GM10248 (cell line): ENCODE measurements at regions of chr9 and their contacts with region 1.

Region 1: DNA sequence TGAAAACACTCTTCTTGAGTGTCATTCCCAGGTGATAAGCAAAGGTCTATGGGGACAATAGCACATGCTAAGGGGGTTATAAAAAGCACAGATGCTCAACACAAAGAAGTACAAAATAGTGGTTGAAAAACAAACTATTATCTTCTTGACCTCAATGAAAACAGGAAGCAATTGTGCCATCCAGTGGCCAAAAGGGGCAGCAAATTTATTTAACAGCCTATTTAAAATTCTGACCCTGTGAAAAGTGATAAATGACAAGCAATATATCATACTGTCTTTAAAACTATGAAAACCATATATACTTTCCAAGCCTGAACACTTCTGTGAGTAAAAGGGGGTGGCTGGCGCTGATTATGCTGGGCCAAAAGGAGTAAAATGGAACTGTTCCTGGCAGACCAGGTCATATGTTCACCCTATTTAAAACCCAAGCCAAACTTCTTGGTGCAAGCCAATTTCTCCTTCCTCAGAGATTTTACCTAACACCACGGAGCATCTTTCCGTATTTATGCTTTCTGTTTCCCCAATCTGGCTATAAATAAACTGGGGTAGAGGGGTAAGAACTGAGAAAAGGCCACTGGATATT is 29.7 kb downstream of the TEX10 start:
- DNase-seq: peak; percentile 13
- CTCF ChIP-seq: peak; percentile 58

Region 2: DNA sequence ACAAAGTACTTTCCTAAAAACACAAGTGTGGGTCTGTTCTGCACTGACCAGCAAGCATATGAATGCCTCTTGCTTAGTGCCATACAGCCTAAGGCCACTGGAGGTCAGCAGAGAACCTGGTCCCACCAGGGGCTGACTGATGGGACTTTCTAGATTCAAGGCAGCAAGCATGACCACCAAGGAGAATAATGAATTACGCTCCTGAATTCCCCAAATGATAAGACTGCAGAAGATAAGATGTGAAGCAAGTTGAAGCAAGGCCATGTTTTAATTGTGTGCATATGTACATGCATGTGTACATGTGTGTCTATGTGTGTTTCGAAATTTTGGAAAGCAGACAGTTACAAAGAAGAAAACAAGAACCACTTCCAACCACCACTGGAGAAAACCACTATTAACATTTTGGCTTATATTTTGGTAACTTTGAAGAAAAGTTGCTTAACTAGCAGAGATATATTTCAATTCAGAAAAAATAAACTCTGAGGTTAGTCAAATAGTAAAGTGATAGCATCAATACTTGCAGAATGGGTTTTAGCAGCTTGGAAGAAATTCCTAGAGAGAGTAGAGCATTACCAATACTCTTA is 294.8 kb before region 1 on chr9:
- CTCF ChIA-PET with region 1: interaction called, 10 read pairs
- POLR2A ChIA-PET with region 1: no interaction called
- DNase-seq: peak; percentile 66
- CTCF ChIP-seq: peak; percentile 94

Region 3: GRCh38 chr9:100216178-100216787 is 106.8 kb before region 1 on chr9:
- CTCF ChIA-PET with region 1: interaction called, 14 read pairs
- POLR2A ChIA-PET with region 1: no interaction called
- DNase-seq: peak; percentile 55
- CTCF ChIP-seq: peak; percentile 82

Region 4: DNA sequence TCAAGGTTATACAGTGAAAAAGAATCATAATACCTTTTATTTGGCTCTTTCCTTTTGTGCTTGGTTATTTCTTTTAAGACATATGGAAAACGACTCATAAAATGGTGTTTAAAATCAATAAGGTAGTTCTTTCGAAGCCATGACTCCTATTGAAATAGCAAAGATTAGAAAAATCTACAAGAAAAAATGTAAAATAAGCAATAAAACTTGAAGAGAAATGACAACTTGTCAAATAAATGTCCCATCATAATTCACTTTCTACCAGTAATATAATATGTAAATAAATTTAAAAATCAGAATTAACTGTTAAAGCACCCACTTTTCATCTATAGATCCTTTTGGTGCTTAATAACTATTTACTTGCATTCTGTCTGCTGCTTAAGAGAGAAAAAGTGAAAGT is 17.2 kb after region 1 on chr9:
- CTCF ChIA-PET with region 1: interaction called, 37 read pairs
- POLR2A ChIA-PET with region 1: no interaction called
- DNase-seq: no peak
- CTCF ChIP-seq: no peak

Region 5: GRCh38 chr9:100346836-100347235 is 23.8 kb after region 1 on chr9:
- CTCF ChIA-PET with region 1: interaction called, 37 read pairs
- POLR2A ChIA-PET with region 1: no interaction called
- DNase-seq: no peak
- CTCF ChIP-seq: no peak

Region 6: DNA sequence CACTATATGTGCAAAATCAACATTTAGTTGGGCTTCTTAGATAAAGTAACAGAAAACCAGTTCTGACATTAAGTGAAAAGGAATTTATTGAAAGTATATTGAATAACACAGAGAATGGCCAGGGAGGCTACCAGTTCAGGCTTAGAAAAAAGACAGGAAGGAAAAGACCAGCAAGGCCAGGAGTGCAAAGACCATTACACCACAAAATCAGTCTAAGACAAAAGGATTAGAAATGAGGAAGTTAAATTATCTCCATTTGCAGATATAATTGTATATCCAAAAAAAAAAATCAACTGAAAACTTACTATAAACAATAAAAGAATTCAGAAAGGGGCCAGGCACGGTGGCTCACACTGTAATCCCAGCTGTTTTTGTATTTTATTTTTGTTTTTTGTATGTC is 34.5 kb after region 1 on chr9:
- CTCF ChIA-PET with region 1: no interaction called
- POLR2A ChIA-PET with region 1: no interaction called
- DNase-seq: no peak
- CTCF ChIP-seq: no peak